Posterior cingulate gyrus (tissue), 11 donors: ENCODE measurements at regions of chr1 and their contacts with region 1.

Region 1: DNA sequence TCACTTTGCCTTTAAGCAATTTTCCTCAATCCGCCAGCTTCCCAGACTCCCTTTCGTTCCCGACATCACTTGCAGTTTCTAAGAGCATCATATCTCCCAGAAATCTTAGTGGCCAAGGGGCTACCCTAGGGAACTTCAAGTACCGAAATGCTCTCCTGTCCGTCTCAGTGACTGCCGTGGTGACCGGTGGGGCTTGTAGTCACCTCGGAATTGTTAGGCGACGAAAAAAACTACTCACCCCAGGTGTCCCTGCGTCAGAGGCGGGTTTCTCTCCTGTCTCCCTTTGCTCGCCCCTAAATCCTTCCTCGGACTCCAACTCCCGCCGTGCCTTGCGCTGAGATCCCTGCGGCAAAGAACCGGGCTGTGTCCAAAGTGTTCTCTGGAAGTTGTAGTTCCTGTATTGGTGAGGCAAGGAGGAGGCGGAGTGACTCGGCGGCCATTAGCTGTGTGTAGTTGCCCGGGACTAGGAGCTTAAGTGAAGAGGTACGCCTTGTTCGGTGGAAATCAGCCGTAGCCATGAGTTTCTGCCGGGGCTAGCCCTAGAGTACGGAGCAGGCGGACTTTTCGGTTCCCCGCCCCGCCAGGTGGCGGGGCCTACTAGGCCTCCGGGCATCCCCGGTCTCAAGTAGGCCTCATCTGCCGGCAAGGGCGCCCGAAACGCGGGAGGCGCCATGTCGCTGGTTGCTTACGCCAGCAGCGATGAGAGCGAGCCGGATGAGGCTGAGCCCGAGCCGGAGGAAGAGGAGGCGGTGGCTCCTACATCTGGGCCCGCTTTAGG is at the start of gene PRCC:
- DNase-seq: peak; percentile 99 to 100 (median 100)

Region 2: GRCh38 chr1:156310962-156311361 is 456.3 kb before region 1 on chr1:
- intact Hi-C with region 1: no loop called
- DNase-seq: peak in 1 of 10 donors; percentile 14

Region 3: GRCh38 chr1:156740679-156741612 is 26.3 kb before region 1 on chr1 and contains the start of gene MRPL24:
- intact Hi-C with region 1: loop called (anchors 1 kb)
- DNase-seq: peak; percentile 97 to 100 (median 98)